ENCODE measurements at regions of chr10 and their contacts with region 1.

Region 1: DNA sequence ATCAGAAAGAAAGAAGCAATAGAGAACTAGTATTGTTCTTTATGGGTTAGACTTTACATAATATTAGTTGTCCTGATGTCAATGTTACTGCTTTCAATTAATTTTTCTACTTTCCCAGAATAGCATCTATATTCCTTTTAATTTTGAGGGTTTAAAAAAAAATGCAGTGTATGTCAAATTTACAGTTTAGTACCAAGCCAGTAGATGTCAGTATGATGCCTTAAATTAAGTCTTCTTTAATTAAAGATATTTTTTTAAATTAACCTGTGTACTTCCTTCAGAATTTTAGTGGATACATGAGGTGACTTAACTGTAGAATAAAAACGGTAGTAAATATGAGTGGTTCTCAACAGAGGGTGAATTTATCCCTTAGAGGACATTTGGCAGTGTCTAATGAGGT is 35.2 kb upstream of the STOX1 start:
- DNase-seq: no peak
- ATAC-seq: peak; percentile 27; the same call in 1 of the 2 replicates
- H3K4me3 ChIP-seq: no peak overlapping the region
- H3K27ac ChIP-seq: no peak overlapping the region
- H3K4me1 ChIP-seq: no peaks in the 10 kb centered on the region
- H3K27me3 ChIP-seq: no peaks in the 10 kb centered on the region
- CTCF ChIP-seq: peak; percentile 3 to 30 (median 20); a peak in 1 of 6 replicates
- POLR2A ChIP-seq: no peak
- RAD21 ChIP-seq: peak; percentile 52

Region 2: DNA sequence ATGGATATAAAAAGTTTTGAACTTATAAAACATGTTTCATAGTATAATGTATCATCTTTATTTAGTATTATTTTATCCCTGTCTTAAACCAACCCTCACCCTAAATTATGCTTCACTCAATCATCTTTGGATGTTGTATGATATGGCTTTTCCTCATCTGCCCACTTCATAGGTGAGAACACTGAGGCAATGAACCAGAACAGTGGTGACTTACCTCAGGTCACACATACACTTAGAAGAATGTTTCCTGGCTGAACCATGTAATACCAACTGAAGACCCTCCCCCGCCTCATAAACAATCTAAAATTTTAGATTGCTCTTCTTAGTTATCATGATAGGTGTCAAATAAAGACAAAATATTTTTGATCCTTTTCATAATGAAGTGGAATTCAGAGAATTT is 12.6 kb after region 1 on chr10:
- CTCF ChIA-PET with region 1: no interaction called
- POLR2A ChIA-PET with region 1: no interaction called
- RAD21 ChIA-PET with region 1: no interaction called
- intact Hi-C with region 1: no loop called
- DNase-seq: no peak
- ATAC-seq: no peak
- H3K4me3 ChIP-seq: no peak overlapping the region
- H3K27ac ChIP-seq: peak overlapping the region; percentile 62
- H3K4me1 ChIP-seq: peaks cover 11 to 19% of the 10 kb centered on the region in 2 experiments
- H3K27me3 ChIP-seq: no peaks in the 10 kb centered on the region
- CTCF ChIP-seq: no peak
- POLR2A ChIP-seq: no peak
- RAD21 ChIP-seq: no peak

Region 3: DNA sequence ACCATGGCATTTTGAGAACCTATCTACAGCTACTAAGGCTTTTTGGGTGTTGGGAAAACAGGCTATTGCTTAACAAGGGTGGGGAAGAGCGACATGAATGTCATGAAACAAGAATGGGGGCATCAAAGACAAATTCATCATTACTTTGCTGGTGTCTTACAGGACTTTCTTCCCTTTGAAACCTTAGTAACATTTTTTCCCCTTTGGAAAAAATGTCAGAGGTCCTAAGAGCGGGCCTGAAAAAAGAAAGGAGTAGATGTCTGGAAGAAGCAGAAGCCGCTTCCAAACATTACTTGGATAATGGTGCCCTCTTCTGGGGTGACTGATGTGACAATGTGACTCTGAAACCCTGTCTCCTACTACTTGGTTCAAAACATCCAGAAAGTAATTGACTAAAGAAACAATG is 105.2 kb after region 1 on chr10:
- CTCF ChIA-PET with region 1: no interaction called
- POLR2A ChIA-PET with region 1: no interaction called
- RAD21 ChIA-PET with region 1: no interaction called
- intact Hi-C with region 1: loop called (anchors 1 kb)
- DNase-seq: peak; percentile 48
- ATAC-seq: no peak
- H3K4me3 ChIP-seq: no peak overlapping the region
- H3K27ac ChIP-seq: no peak overlapping the region
- H3K4me1 ChIP-seq: peaks cover 0 to 12% of the 10 kb centered on the region in 2 experiments; a peak in 2 of 4 replicates
- H3K27me3 ChIP-seq: no peaks in the 10 kb centered on the region
- CTCF ChIP-seq: peak; percentile 30 to 68 (median 61); a peak in 5 of 6 replicates
- POLR2A ChIP-seq: no peak
- RAD21 ChIP-seq: peak; percentile 88

Region 4: DNA sequence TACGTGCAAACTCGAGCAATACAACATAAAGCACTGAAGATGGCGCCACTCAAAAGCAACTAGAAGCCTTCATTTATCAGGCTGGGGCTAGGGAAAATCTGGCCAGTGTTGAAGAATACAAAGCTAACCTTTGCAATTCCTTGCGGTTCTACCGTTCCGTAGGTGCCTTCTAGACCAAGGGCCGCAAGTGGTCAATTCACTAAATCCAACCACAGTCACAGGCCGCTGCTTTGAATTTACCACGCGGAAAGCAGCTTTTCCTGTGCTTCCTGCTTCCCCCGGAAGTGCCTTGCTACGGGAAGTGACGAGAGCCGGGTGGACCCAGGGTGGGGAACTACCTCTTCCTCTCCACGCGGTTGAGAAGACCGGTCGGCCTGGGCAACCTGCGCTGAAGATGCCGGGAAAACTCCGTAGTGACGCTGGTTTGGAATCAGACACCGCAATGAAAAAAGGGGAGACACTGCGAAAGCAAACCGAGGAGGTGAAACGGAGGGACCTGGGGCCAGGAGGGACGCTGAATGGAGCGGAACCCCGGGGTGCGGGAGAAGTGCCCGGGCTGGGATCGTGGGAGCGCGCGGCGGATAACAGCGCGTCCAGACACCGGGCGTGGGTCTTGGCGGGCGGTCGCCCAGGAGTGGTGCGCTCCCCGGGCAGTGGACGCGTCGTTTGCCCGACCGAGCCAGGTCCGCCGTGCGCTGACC is 163.9 kb after region 1 on chr10 and contains the start of gene DDX21:
- CTCF ChIA-PET with region 1: no interaction called
- POLR2A ChIA-PET with region 1: no interaction called
- RAD21 ChIA-PET with region 1: no interaction called
- intact Hi-C with region 1: loop called (anchors 10 kb)
- DNase-seq: peak; percentile 88
- ATAC-seq: peak; percentile 90
- H3K4me3 ChIP-seq: peak within 1 kb of the TSS; percentile 99
- H3K27ac ChIP-seq: peak within 1 kb of the TSS; percentile 87
- H3K4me1 ChIP-seq: peaks cover 11 to 12% of the 10 kb centered on the region in 2 experiments; a peak in 3 of 4 replicates
- H3K27me3 ChIP-seq: no peaks in the 10 kb centered on the region
- CTCF ChIP-seq: peak; percentile 44 to 63 (median 53); a peak in 5 of 6 replicates
- POLR2A ChIP-seq: peak; percentile 73
- RAD21 ChIP-seq: peak; percentile 48
- total RNA-seq, gene DDX21: 153 TPM

Region 5: DNA sequence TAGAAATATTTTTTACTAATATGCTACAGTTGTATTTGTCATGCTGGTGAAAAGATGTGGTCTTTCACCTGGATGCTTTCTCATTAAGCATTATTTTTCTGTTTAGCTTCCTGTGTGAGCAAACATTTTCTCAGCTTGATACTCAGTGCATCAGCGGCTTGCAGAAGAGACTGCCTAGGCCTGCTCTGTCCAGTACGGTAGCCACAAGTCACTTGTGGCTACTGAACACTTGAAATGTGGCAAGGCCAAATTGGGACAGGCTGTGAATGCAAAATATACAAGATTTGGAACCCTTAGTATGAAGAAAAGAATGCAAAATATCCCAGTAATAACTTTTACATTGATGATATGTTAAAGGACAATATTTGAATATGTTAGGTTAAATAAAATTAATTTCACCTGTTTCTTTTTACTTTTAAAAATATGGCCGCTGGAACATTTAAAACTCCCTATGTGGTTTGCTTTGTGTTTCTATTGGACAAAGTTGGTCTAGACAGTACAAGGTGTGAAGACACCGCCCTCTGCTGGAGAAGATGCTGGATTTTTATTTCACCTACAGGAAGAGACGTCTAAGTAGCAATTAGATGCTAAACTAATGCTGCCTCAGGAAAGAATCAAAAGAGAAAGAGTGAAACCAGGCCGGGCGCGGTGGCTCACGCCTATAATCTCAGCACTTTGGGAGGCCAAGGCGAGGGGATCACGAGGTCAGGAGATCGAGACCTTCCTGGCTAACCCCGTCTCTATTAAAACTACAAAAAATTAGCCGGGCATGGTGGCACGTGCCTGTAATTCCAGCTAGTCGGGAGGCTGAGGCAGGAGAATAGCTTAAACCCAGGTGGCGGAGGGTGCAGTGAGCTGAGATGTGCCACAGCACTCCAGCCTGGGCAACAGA is 301.1 kb after region 1 on chr10:
- CTCF ChIA-PET with region 1: no interaction called
- POLR2A ChIA-PET with region 1: no interaction called
- RAD21 ChIA-PET with region 1: no interaction called
- intact Hi-C with region 1: loop called (anchors 5 kb)
- DNase-seq: peak; percentile 89
- ATAC-seq: peak; percentile 97
- H3K4me3 ChIP-seq: no peak overlapping the region
- H3K27ac ChIP-seq: no peak overlapping the region
- H3K4me1 ChIP-seq: peaks cover 0 to 2% of the 10 kb centered on the region in 2 experiments; a peak in 2 of 4 replicates
- H3K27me3 ChIP-seq: no peaks in the 10 kb centered on the region
- CTCF ChIP-seq: peak; percentile 57 to 87 (median 81)
- POLR2A ChIP-seq: no peak
- RAD21 ChIP-seq: peak; percentile 88